Activated B cell treated with CpG ODN at 0.5 μM for 24 hours (primary cell): ENCODE measurements at regions of chr1 and their contacts with region 1.

Region 1: DNA sequence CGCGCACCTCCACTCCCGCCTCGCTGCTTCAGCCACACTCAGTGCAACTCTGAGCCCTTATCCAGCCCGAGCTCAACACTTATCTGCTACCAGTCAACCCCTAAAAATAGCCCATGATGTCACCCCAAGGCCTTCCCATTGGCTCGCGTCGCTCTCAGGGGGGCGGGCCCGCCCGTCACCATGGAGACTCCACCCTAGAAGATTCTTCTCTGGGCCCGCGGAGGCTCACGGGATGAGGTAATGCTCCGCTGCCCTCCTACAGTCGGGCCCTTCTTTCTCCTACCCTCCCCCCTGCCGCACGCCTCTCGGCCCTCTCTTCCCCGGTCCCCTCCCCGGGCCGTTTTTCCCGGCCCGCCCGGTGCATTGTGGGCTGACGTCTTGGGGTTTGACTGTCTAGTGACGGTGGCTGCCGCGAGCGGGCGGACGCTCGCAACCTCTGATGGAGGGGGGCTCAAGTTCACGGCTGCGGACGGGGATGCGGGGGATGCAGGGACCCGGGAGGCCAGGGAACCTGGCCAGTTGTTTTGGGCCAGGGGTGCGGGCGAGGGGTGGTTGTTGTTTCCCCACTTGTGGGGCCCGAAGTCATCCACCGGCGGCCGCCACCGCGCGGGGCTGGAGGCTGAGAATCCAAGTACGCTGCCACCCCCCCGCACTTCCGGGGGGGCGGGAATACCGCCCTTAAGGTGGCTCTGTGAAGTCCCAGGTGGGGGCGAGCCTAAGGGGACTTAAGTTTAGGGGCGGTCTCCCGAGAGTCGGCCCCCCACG is at the start of gene JUN:
- DNase-seq: peak; percentile 93
- ATAC-seq: peak; percentile 72
- H3K4me3 Mint-ChIP-seq: peak within 1 kb of the TSS; percentile 96
- H3K27ac Mint-ChIP-seq: peak within 1 kb of the TSS; percentile 99
- H3K4me1 Mint-ChIP-seq: peaks cover 38% of the 10 kb centered on the region
- H3K27me3 Mint-ChIP-seq: no peaks in the 10 kb centered on the region
- CTCF ChIP-seq: no peak
- total RNA-seq, gene JUN: 35.3 and 36.6 TPM in 2 replicates

Region 2: GRCh38 chr1:58546520-58547308 is 237.5 kb before region 1 on chr1 and contains the start of gene OMA1:
- CTCF ChIA-PET with region 1: no interaction called
- POLR2A ChIA-PET with region 1: interaction called, 3 read pairs
- intact Hi-C with region 1: loop called (anchors 1 kb)
- DNase-seq: peak; percentile 98
- ATAC-seq: peak; percentile 93
- H3K4me3 Mint-ChIP-seq: peak within 1 kb of the TSS; percentile 96
- H3K27ac Mint-ChIP-seq: peak within 1 kb of the TSS; percentile 97
- H3K4me1 Mint-ChIP-seq: peaks cover 19% of the 10 kb centered on the region
- H3K27me3 Mint-ChIP-seq: peaks cover 2% of the 10 kb centered on the region
- CTCF ChIP-seq: peak; percentile 24
- total RNA-seq, gene OMA1: 47.8 and 48.7 TPM in 2 replicates

Region 3: GRCh38 chr1:58805716-58806571 is 21.8 kb after region 1 on chr1:
- CTCF ChIA-PET with region 1: no interaction called
- POLR2A ChIA-PET with region 1: interaction called, 32 read pairs
- intact Hi-C with region 1: no loop called
- DNase-seq: no peak
- ATAC-seq: peak; percentile 78
- H3K4me3 Mint-ChIP-seq: peak overlapping the region; percentile 64
- H3K27ac Mint-ChIP-seq: peak overlapping the region; percentile 92
- H3K4me1 Mint-ChIP-seq: peaks cover 55% of the 10 kb centered on the region
- H3K27me3 Mint-ChIP-seq: no peaks in the 10 kb centered on the region
- CTCF ChIP-seq: no peak

Region 4: GRCh38 chr1:58829861-58830260 is 45.7 kb after region 1 on chr1:
- CTCF ChIA-PET with region 1: no interaction called
- POLR2A ChIA-PET with region 1: no interaction called
- intact Hi-C with region 1: no loop called
- DNase-seq: no peak
- ATAC-seq: no peak
- H3K4me3 Mint-ChIP-seq: no peak overlapping the region
- H3K27ac Mint-ChIP-seq: no peak overlapping the region
- H3K4me1 Mint-ChIP-seq: no peaks in the 10 kb centered on the region
- H3K27me3 Mint-ChIP-seq: no peaks in the 10 kb centered on the region
- CTCF ChIP-seq: no peak

Region 5: DNA sequence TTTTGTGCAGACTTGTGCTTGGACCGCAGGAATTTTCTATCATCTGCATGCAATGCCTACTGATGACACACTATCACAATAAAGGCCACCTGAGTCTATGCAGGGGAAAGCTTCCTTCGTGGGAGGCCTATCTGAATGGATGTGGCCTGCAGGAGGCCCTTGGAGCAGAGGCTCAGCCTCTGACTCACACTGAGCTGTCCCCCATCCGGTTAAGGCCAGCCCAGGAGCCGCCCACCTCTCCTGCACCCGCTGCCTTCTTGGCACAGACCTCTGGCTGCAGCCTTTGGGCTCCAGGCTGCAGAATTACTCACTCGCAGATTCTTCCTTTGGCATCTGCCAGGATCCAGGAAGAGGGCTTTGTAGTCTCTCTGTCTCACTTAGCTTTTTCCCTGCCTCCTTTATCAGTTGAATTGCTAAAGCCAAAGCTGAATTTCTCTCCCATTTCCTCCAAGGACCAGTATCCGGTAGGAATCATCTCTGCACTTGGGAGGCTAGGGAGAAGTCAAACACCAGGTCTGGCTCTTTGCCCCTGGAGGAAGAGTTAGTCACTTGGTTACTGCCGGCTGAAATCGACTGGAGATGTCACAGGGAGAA is 64.7 kb after region 1 on chr1:
- CTCF ChIA-PET with region 1: no interaction called
- POLR2A ChIA-PET with region 1: no interaction called
- intact Hi-C with region 1: no loop called
- DNase-seq: no peak
- ATAC-seq: no peak
- H3K4me3 Mint-ChIP-seq: no peak overlapping the region
- H3K27ac Mint-ChIP-seq: no peak overlapping the region
- H3K4me1 Mint-ChIP-seq: no peaks in the 10 kb centered on the region
- H3K27me3 Mint-ChIP-seq: no peaks in the 10 kb centered on the region
- CTCF ChIP-seq: no peak

Region 6: DNA sequence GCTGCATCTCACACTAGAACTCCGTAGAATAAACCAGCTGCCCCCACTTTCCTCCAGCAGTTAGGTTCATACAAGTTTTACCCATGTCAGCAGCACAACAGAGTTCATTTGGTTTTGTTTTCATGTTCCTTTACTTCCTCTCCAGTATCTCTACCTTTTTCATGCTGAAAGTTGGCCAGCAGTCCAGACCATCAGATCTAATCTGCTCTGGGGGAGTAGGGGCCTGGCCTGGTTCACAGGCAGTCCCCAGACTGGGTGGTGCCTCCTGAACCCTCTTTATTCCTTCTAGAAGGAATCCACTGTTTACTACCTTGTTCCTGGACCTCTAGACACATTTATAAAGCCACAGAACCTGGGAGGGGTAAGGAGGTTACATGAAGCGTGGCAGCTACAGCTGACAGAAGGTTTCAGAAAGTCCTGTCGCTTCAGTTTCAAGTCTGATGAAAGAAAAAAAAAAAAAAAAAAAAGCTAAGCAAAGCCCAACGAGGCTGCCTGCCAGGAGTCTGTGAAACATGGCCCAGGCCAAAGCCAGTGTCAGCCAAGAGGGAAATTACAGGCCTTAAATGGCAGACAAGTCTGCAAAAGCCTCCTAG is 184.3 kb after region 1 on chr1:
- CTCF ChIA-PET with region 1: no interaction called
- POLR2A ChIA-PET with region 1: interaction called, 29 read pairs
- intact Hi-C with region 1: loop called (anchors 1 kb)
- DNase-seq: peak; percentile 46
- ATAC-seq: peak; percentile 95
- H3K4me3 Mint-ChIP-seq: peak overlapping the region; percentile 77
- H3K27ac Mint-ChIP-seq: peak overlapping the region; percentile 99
- H3K4me1 Mint-ChIP-seq: peaks cover 72% of the 10 kb centered on the region
- H3K27me3 Mint-ChIP-seq: no peaks in the 10 kb centered on the region
- CTCF ChIP-seq: no peak

Region 7: GRCh38 chr1:59076612-59077011 is 292.4 kb after region 1 on chr1:
- CTCF ChIA-PET with region 1: no interaction called
- POLR2A ChIA-PET with region 1: interaction called, 11 read pairs
- intact Hi-C with region 1: loop called (anchors 2 kb)
- DNase-seq: no peak
- ATAC-seq: no peak
- H3K4me3 Mint-ChIP-seq: no peak overlapping the region
- H3K27ac Mint-ChIP-seq: no peak overlapping the region
- H3K4me1 Mint-ChIP-seq: peaks cover 31% of the 10 kb centered on the region
- H3K27me3 Mint-ChIP-seq: no peaks in the 10 kb centered on the region
- CTCF ChIP-seq: no peak

Region 8: GRCh38 chr1:59296358-59297256 is 512.4 kb after region 1 on chr1 and contains the start of gene FGGY:
- CTCF ChIA-PET with region 1: interaction called, 7 read pairs
- POLR2A ChIA-PET with region 1: interaction called, 74 read pairs
- intact Hi-C with region 1: loop called (anchors 1 kb)
- DNase-seq: peak; percentile 85
- ATAC-seq: peak; percentile 88
- H3K4me3 Mint-ChIP-seq: peak within 1 kb of the TSS; percentile 92
- H3K27ac Mint-ChIP-seq: peak within 1 kb of the TSS; percentile 95
- H3K4me1 Mint-ChIP-seq: peaks cover 48% of the 10 kb centered on the region
- H3K27me3 Mint-ChIP-seq: no peaks in the 10 kb centered on the region
- CTCF ChIP-seq: no peak
- total RNA-seq, gene FGGY: 22.1 and 24.0 TPM in 2 replicates

Region 9: DNA sequence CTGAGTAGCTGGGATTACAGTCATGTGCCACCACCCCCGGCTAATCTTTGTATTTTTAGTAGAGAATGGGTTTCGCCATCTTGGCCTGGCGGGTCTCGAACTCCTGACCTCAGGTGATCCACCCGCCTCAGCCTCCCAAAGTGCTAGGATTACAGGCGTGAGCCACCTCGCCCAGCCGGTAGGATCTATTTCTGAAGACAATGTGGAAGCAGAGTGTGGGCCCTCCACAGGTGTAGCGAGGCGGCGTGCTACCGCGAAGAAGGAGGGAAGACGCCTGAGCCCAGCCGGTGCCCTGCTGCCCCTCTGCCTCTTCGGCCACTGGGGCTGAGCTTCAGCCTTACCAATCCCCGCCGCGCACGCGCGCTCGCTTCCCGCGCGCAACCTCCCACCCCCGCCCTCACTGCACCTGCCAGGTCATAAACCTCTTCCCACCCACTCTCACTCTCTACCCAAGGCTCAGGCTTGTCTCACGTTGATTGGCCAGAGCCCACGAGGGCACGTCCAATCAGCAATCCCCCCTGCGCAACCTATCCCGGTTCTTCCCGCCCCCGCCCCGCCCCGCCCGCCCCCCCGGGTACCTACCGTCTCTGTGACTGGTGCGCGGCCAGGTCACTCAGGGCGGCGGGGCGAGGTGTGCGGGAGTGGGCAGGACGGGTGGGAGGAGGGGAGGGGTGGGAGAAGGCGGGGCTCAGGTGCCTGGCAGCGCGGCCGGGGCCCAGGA is 1030.2 kb after region 1 on chr1:
- CTCF ChIA-PET with region 1: no interaction called
- POLR2A ChIA-PET with region 1: no interaction called
- intact Hi-C with region 1: loop called (anchors 1 kb)
- DNase-seq: peak; percentile 73
- ATAC-seq: peak; percentile 94
- H3K4me3 Mint-ChIP-seq: no peak overlapping the region
- H3K27ac Mint-ChIP-seq: peak overlapping the region; percentile 78
- H3K4me1 Mint-ChIP-seq: peaks cover 5% of the 10 kb centered on the region
- H3K27me3 Mint-ChIP-seq: peaks cover 3% of the 10 kb centered on the region
- CTCF ChIP-seq: no peak